IMR-90 (cell line): ENCODE measurements at regions of chr19 and their contacts with region 1.

Region 1: GRCh38 chr19:47210689-47211316 is 20.2 kb downstream of the BBC3 start:
- DNase-seq: peak; percentile 80
- ATAC-seq: peak; percentile 70
- H3K4me3 ChIP-seq: no peak overlapping the region
- H3K27ac ChIP-seq: peak overlapping the region; percentile 90
- H3K4me1 ChIP-seq: peaks cover 21% of the 10 kb centered on the region
- H3K27me3 ChIP-seq: no peaks in the 10 kb centered on the region
- CTCF ChIP-seq: peak; percentile 81
- POLR2A ChIP-seq: no peak
- RAD21 ChIP-seq: peak; percentile 75

Region 2: DNA sequence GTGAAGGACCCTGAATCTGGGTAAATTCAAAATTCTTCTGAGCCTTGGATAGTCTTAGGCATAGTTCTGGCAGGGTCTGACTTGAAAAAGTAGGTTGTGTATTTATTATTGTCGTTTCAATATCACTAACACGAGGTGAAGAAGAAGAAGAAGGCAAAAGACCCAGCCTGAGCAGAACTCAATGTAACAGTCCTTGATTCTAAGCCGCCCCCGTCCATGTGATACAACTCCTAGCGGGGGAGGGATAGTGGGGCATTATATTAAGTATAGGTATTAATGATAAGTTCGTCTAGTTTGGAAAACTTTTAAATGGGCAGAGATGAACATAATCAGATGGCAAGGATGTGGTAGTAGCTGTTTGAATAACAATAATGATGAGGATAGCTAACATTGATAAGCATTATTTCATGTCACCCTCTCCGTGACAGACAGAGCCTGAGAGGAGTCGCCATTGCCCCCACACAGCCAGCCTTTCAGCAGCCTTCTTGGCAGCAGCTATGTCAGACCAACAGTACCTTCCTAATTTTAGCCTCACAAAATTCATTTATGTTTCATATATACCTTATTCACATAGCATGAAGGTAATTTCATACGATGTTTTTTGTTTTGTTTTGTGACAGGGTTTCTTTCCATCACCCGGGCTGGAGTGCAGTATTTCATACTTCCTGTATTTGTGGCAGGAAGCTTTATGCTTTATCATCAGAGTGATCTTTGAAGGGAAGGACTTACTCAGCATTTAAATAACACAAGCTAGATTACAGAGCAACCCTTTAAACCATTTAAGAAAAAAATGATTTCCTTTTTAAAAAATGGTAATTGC is 255.6 kb before region 1 on chr19:
- CTCF ChIA-PET with region 1: no interaction called
- POLR2A ChIA-PET with region 1: interaction called, 17 read pairs
- dilution Hi-C with region 1: no loop called
- in situ Hi-C with region 1: no loop called
- intact Hi-C with region 1: no loop called
- DNase-seq: peak; percentile 52
- ATAC-seq: peak; percentile 59
- H3K4me3 ChIP-seq: no peak overlapping the region
- H3K27ac ChIP-seq: no peak overlapping the region
- H3K4me1 ChIP-seq: peaks cover 33% of the 10 kb centered on the region
- H3K27me3 ChIP-seq: no peaks in the 10 kb centered on the region
- CTCF ChIP-seq: no peak
- POLR2A ChIP-seq: no peak
- RAD21 ChIP-seq: no peak

Region 3: GRCh38 chr19:47094557-47095475 is 116.0 kb before region 1 on chr19:
- CTCF ChIA-PET with region 1: no interaction called
- POLR2A ChIA-PET with region 1: no interaction called
- dilution Hi-C with region 1: no loop called
- in situ Hi-C with region 1: no loop called
- intact Hi-C with region 1: no loop called
- DNase-seq: no peak
- ATAC-seq: peak; percentile 37
- H3K4me3 ChIP-seq: no peak overlapping the region
- H3K27ac ChIP-seq: no peak overlapping the region
- H3K4me1 ChIP-seq: peaks cover 7% of the 10 kb centered on the region; the same call in 1 of the 2 replicates
- H3K27me3 ChIP-seq: no peaks in the 10 kb centered on the region
- CTCF ChIP-seq: no peak
- POLR2A ChIP-seq: no peak
- RAD21 ChIP-seq: no peak

Region 4: GRCh38 chr19:47152224-47153017 is 58.4 kb before region 1 on chr19:
- CTCF ChIA-PET with region 1: interaction called, 5 read pairs
- POLR2A ChIA-PET with region 1: no interaction called
- dilution Hi-C with region 1: no loop called
- in situ Hi-C with region 1: no loop called
- intact Hi-C with region 1: loop called (anchors 1 kb)
- DNase-seq: peak; percentile 47
- ATAC-seq: no peak
- H3K4me3 ChIP-seq: no peak overlapping the region
- H3K27ac ChIP-seq: no peak overlapping the region
- H3K4me1 ChIP-seq: peaks cover 10% of the 10 kb centered on the region
- H3K27me3 ChIP-seq: no peaks in the 10 kb centered on the region
- CTCF ChIP-seq: no peak
- POLR2A ChIP-seq: no peak
- RAD21 ChIP-seq: no peak

Region 5: DNA sequence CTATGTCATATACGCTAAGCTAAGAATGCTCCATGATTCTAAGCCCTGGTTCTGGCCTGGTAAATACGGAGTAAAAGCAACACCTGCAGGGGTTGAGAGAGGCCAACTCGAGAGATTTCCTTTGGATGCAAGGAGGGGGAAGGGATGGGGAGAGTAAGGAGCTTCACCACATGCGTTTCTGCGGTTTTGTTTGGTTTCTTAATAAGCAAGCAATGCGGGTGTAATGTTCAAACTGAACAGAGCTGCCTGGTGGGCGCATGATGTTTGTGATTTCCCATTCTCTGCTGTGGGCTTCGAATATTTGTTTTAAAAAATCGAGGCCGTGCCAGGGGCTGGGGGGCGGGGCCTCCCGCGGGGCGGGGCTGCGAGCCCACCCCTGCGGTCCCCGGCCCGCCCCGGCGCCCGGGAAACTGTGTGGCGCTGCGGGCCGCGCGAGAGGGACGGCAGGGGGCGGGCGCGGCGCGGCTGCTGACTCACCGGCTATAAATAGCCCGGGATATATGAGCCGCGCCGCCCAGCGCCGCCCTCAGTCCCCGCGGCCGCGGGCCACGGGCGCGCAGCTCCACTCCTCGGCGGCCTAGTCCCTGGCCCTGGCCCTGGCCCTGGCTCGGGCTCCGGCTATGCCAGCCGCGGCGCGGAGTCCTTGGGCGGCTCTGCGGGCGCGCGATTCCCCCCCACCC is 15.1 kb after region 1 on chr19:
- CTCF ChIA-PET with region 1: interaction called, 13 read pairs
- POLR2A ChIA-PET with region 1: interaction called, 5 read pairs
- dilution Hi-C with region 1: no loop called
- in situ Hi-C with region 1: no loop called
- intact Hi-C with region 1: loop called (anchors 1 kb)
- DNase-seq: peak; percentile 84
- ATAC-seq: peak; percentile 57
- H3K4me3 ChIP-seq: peak overlapping the region; percentile 1
- H3K27ac ChIP-seq: peak overlapping the region; percentile 97
- H3K4me1 ChIP-seq: peaks cover 19% of the 10 kb centered on the region
- H3K27me3 ChIP-seq: no peaks in the 10 kb centered on the region
- CTCF ChIP-seq: peak; percentile 39
- POLR2A ChIP-seq: peak; percentile 99
- RAD21 ChIP-seq: no peak

Region 6: DNA sequence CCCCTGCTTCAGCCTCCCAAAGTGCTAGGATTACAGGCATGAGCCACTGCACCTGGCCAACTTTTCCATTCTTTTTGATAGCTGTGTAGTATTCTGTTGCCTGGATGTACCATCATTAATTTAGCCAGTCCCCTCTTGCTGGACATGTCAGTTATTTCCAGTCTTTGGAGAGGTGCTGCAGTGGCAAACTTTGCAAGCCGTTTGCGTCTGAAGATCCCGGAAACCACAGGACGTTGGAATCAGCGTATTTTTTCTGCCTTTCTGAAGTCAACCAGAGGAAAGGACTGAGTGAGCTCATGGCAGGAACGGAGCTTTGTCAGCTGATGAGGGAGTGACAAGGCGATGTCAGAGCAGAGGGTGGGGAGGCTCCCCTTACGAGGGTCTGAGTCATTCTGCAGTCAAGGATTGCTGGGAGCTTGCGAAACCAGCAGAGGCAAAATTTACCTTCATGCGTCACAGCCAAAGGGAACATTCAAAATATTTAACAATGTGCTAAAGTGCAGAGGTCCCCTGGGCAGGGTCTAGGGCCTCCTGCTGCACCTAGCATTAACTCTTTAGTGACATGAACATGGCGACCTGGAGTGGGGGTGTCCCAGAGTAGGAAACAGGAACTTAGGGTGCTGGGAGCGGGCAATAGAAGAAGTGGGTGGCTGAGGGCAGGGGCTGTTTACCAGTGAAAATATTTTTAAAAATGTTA is 104.5 kb after region 1 on chr19:
- CTCF ChIA-PET with region 1: no interaction called
- POLR2A ChIA-PET with region 1: no interaction called
- dilution Hi-C with region 1: no loop called
- in situ Hi-C with region 1: no loop called
- intact Hi-C with region 1: no loop called
- DNase-seq: peak; percentile 97
- ATAC-seq: peak; percentile 98
- H3K4me3 ChIP-seq: no peak overlapping the region
- H3K27ac ChIP-seq: peak overlapping the region; percentile 2; the same call in 1 of the 2 replicates
- H3K4me1 ChIP-seq: 0 out of 2 replicates have a peak, but pooled peaks cover 2% of the 10 kb centered on the region
- H3K27me3 ChIP-seq: no peaks in the 10 kb centered on the region
- CTCF ChIP-seq: no peak
- POLR2A ChIP-seq: no peak
- RAD21 ChIP-seq: no peak